ENCODE measurements at regions of chr16 and their contacts with region 1.

Region 1: DNA sequence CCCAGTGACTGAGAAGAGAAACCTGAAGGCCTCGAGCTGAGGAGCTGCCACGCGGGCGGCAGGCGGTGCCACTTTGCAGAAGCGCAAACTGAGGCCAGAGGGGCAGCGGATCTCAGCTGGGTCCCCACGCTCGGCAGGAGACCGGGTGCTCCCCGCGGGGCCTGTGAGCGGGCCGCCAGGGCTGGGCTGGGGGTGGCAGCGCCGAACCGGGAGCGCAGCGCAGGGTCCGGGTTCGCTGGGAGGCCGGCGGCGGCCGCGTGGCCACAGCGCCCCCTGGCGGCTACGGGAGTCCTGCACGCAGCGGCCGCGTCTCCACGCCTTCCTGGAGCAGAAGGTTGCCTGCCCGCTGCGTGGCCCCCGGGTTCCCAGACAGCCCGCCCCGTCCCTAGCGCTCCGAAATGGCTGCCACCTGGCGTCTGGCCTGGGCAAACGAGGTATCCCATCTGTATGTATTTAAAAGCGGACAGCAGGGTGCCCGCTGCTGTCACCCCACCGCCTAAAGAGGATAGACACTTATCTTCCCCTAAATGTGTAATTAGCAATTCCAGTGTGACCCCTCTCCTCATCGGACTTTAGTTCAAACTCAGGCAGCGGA is 96.1 kb upstream of the CDH5 start:
- DNase-seq: peak; percentile 61
- H3K4me3 ChIP-seq: peak overlapping the region in 2 of 4 donors; percentile 25 to 37
- H3K27ac ChIP-seq: peak overlapping the region; percentile 3 to 42 (median 34)
- H3K4me1 ChIP-seq: peaks cover 0 to 8% (median 3%) of the 10 kb centered on the region in 4 donors
- H3K27me3 ChIP-seq: peaks cover 4% of the 10 kb centered on the region
- CTCF ChIP-seq: peak; percentile 39 to 97 (median 91)
- EP300 ChIP-seq: no peak
- POLR2A ChIP-seq: no peak

Region 2: GRCh38 chr16:65136681-65137080 is 1133.7 kb before region 1 on chr16:
- in situ Hi-C with region 1: no loop called
- intact Hi-C with region 1: loop called (anchors 10 kb)
- DNase-seq: no peak
- H3K4me3 ChIP-seq: no peak overlapping the region
- H3K27ac ChIP-seq: no peak overlapping the region
- H3K4me1 ChIP-seq: no peaks in the 10 kb centered on the region
- H3K27me3 ChIP-seq: no peaks in the 10 kb centered on the region
- CTCF ChIP-seq: no peak
- EP300 ChIP-seq: no peak
- POLR2A ChIP-seq: no peak

Region 3: GRCh38 chr16:65754820-65755691 is 515.4 kb before region 1 on chr16:
- in situ Hi-C with region 1: loop called in 1 of 4 experiments (anchors 25 kb)
- intact Hi-C with region 1: no loop called
- DNase-seq: peak; percentile 24
- H3K4me3 ChIP-seq: no peak overlapping the region
- H3K27ac ChIP-seq: no peak overlapping the region
- H3K4me1 ChIP-seq: no peaks in the 10 kb centered on the region
- H3K27me3 ChIP-seq: no peaks in the 10 kb centered on the region
- CTCF ChIP-seq: no peak
- EP300 ChIP-seq: no peak
- POLR2A ChIP-seq: no peak